ENCODE measurements at regions of chr1 and their contacts with region 1.

Region 1: GRCh38 chr1:231211005-231211857 is 29.8 kb upstream of the GNPAT start:
- DNase-seq: peak; percentile 97
- ATAC-seq: peak; percentile 88
- H3K4me3 ChIP-seq: peak overlapping the region; percentile 74
- H3K27ac ChIP-seq: no peak overlapping the region
- H3K4me1 ChIP-seq: 0 out of 2 replicates have a peak, but pooled peaks cover 6% of the 10 kb centered on the region
- H3K27me3 ChIP-seq: peaks cover 3% of the 10 kb centered on the region
- CTCF ChIP-seq: peak; percentile 96

Region 2: GRCh38 chr1:230632273-230632873 is 578.9 kb before region 1 on chr1:
- CTCF ChIA-PET with region 1: no interaction called
- POLR2A ChIA-PET with region 1: no interaction called
- intact Hi-C with region 1: loop called (anchors 1 kb)
- DNase-seq: peak; percentile 85
- ATAC-seq: peak; percentile 95
- H3K4me3 ChIP-seq: no peak overlapping the region
- H3K27ac ChIP-seq: no peak overlapping the region
- H3K4me1 ChIP-seq: no peaks in the 10 kb centered on the region
- H3K27me3 ChIP-seq: peaks cover 47% of the 10 kb centered on the region
- CTCF ChIP-seq: peak; percentile 98

Region 3: DNA sequence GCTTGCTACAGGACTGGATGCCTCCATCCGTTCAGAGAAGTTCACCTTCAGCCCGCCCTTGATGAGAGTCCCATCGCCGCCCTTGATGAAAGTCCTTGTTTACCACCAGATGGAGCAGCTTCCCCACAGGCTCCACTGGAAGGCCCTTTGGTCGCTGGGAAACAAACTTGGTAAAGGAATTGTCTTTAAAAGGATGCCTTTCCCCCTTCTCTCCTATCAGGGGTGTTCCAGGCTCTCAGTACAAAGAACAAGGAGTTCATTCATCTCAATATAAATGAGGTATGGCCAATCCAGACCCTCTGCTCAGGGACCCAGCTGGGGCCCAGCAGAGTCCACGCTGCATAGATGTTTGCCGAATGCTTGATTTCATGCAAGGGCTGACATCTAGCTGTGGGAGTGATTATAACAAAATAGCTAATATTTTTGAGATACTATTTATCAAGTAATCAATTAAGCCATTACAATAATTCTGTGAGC is 413.3 kb before region 1 on chr1:
- CTCF ChIA-PET with region 1: no interaction called
- POLR2A ChIA-PET with region 1: no interaction called
- intact Hi-C with region 1: loop called (anchors 1 kb)
- DNase-seq: peak; percentile 78
- ATAC-seq: peak; percentile 92
- H3K4me3 ChIP-seq: no peak overlapping the region
- H3K27ac ChIP-seq: no peak overlapping the region
- H3K4me1 ChIP-seq: no peaks in the 10 kb centered on the region
- H3K27me3 ChIP-seq: peaks cover 11% of the 10 kb centered on the region
- CTCF ChIP-seq: peak; percentile 96

Region 4: DNA sequence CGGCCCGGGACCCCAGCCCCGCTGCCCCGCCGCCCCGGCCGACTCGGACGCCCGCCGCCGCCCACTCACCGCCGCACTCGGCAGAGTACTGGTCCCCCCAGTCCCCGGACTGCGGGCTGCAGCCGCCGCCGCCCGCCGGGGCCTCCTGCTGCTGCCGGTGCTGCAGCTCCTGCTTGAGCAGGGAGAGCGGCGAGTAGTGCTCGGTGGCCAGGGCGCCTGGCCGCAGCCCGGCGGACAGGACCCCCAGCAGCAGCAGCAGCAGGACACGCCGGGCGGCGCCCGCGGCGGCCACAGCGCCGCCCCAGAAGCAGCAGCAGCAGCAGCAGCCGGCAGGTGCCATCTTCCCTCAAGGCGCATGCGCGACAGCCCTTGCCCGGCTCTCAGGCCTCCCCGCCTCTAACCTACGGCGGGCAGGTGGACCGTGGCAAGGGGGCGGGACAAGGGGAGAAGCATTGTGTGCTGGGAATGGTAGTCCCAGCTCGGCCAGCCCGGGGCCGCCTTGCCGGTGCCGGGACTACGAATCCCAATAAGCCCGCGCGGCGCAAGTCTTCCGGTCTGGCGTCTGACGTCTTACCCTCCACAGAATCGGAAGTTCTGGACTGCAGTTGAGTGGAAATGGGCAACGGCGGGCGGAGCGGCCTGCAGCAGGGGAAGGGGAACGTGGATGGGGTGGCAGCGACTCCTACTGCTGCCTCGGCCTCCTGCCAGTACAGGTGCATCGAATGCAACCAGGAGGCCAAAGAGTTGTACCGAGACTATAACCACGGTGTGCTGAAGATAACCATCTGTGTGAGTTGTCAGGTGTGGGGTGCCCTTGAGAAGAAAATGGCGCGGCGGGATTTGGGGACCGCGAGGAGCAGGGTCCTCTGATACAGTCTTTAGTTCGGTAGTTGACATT is 232.5 kb before region 1 on chr1 and contains the starts of genes ARV1 and TTC13:
- CTCF ChIA-PET with region 1: no interaction called
- POLR2A ChIA-PET with region 1: no interaction called
- intact Hi-C with region 1: loop called (anchors 1 kb)
- DNase-seq: peak; percentile 99
- ATAC-seq: peak; percentile 99
- H3K4me3 ChIP-seq: peak within 1 kb of the TSS; percentile 91
- H3K27ac ChIP-seq: no peak within 1 kb of the TSS
- H3K4me1 ChIP-seq: peaks cover 17% of the 10 kb centered on the region
- H3K27me3 ChIP-seq: no peaks in the 10 kb centered on the region
- CTCF ChIP-seq: peak; percentile 60
- total RNA-seq, gene ARV1: 29.4 and 30.6 TPM in 2 replicates
- total RNA-seq, gene TTC13: 17.0 and 20.2 TPM in 2 replicates

Region 5: DNA sequence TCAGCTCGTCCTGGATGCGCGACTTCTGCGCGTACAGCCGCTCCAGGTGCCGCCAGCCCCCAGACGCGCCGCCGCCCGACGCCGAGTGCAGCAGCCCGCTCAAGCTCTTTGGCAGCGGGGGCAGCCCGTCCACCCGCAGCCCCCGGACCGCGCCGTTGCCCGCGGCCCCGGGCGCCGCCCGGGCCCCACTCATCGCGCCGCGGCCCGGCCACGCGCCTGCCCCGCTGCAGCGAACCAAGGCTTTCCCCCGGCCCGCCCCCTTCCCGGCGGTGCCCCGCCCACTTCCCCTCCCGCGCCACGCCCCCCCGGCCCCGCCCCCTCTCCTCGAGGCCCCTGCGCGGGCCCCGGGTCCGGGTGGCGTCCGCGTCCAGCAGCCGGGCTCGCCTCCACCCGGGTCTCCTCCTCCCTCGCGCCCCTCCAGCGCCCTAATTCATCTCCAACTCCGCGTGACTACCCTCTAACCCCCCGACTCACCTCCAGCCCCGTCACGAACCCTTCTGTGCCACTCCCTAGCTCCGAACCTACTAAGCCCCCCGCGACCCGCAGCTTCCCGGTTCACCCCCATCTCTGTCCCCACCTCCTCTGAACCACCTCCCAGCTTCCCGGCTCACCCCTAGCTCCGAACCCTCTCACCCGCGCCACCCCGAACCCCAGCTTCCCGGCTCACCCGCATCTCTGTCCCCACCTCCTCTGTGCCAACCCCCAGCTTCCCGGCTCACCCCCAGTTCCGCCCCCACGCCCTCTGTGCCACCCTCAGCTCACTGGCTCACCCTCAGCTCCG is 171.0 kb before region 1 on chr1 and contains the start of gene FAM89A:
- CTCF ChIA-PET with region 1: interaction called, 15 read pairs
- POLR2A ChIA-PET with region 1: no interaction called
- intact Hi-C with region 1: no loop called
- DNase-seq: peak; percentile 43
- ATAC-seq: peak; percentile 69
- H3K4me3 ChIP-seq: peak within 1 kb of the TSS; percentile 87
- H3K27ac ChIP-seq: no peak within 1 kb of the TSS
- H3K4me1 ChIP-seq: peaks cover 6% of the 10 kb centered on the region; the same call in 1 of the 2 replicates
- H3K27me3 ChIP-seq: peaks cover 16% of the 10 kb centered on the region
- CTCF ChIP-seq: no peak
- total RNA-seq, gene FAM89A: 7.5 and 12.4 TPM in 2 replicates